CD8-positive, alpha-beta memory T cell (primary cell): ENCODE measurements at regions of chr11 and their contacts with region 1.

Region 1: DNA sequence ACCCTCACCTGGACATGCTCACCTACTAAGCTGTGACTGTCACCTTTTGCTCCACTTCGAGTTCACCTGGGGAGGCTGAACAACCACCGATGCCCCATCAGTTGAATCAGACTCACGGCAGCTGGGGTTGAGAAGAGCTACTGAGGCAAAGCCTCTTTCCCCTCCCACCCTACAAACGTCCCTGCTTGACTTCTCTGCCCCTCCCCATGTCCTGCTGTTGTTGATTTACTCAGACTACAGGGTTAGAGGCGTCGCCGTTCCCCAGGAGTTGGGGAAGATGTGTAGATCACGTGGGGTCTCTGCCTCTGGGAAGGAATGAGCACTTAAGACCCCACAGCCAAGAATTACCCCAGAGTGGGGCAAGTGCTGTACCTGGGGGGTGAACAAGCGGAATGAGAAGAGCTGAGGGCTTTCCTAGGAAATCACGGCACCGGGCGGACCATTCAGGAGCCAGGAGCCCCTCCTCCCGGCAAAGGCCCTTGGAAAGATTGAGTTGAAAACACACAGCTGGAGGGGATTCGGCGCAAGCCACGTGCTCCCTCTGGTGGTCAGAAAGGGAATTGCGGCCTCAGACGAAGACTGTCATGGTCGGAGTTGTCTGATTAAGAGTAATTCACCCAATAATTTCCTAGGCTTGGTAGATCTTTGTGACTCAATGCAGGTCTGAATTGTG is 7.0 kb downstream of the FXYD2 start:
- DNase-seq: peak; percentile 69 to 88 (median 75)
- H3K4me3 ChIP-seq: no peak overlapping the region
- H3K4me3 Mint-ChIP-seq: peak overlapping the region in 4 of 7 donors; percentile 54 to 70 (median 56)
- H3K27ac ChIP-seq: no peak overlapping the region
- H3K27ac Mint-ChIP-seq: peak overlapping the region; percentile 74 to 93 (median 88)
- H3K4me1 ChIP-seq: peaks cover 56% of the 10 kb centered on the region
- H3K4me1 Mint-ChIP-seq: peaks cover 38 to 61% (median 47%) of the 10 kb centered on the region in 3 donors
- H3K27me3 ChIP-seq: no peaks in the 10 kb centered on the region
- H3K27me3 Mint-ChIP-seq: peaks cover 0 to 1% of the 10 kb centered on the region in 2 donors

Region 2: DNA sequence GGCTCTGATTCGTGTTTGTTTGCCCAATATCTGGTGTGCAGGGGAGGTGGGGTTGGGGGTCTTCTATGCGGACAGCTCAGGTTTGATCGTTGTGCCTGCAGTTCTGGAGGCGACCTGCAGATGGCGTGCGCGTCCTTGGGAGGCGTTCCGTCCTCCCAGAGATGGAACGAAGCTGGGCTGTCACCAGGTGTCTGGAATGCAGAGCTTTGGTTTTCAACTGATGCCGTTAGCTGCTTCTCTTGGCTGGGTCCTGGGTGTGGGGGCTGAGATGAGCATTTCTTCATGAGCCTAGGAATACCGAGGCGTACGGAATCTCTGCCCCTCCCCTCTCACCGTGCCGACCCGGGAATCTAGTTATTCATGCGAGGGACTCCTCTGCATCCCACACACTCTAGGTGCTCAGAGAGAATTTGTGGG is 391.2 kb before region 1 on chr11:
- CTCF ChIA-PET with region 1: interaction called, 23 read pairs
- POLR2A ChIA-PET with region 1: no interaction called
- DNase-seq: peak; percentile 38 to 75 (median 51)
- H3K4me3 ChIP-seq: no peak overlapping the region
- H3K4me3 Mint-ChIP-seq: peak overlapping the region in 2 of 7 donors; percentile 47 to 51
- H3K27ac ChIP-seq: no peak overlapping the region
- H3K27ac Mint-ChIP-seq: no peak overlapping the region
- H3K4me1 ChIP-seq: peaks cover 4% of the 10 kb centered on the region
- H3K4me1 Mint-ChIP-seq: peaks cover 4 to 13% (median 6%) of the 10 kb centered on the region in 3 donors
- H3K27me3 ChIP-seq: no peaks in the 10 kb centered on the region
- H3K27me3 Mint-ChIP-seq: peaks cover 5 to 18% of the 10 kb centered on the region in 2 donors

Region 3: DNA sequence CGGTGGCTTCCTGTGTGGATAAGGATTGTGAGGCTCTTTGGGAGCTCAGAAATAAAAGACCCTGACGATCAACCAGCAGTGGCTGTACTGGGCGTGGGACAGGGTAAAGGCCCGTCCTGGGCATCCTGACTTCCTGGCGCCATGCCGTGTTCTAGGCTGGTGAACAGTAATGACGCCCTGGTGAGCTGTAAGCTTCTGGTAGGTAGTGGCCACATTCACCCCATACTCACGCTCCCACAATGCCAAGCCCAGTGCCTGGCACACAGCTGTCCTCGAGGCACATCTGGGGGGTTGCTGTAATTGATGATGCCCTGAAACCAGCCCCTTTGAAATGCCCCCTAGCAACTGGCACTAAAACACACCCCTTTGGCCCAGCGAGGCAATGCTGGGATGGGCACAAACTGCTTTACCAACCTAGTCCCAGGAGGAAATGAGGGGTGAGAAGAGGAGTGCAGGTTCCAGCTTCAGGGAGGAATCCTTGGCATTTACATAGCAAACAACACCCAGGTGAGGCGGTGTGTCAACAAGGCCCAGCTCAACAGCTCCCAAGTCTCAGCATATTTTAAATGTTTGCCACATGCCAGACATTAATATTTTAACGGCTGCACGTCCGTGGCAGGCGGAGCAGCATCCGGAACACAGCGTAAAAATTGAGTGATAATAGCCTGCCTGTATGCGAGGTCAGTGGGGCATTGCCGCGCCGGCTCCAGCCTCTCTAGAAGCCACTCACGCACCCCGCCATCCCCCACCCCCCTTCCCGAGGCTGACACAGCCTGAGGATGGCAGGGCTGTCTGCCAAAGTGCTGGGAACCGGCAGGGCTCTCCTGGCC is 99.8 kb before region 1 on chr11:
- CTCF ChIA-PET with region 1: no interaction called
- POLR2A ChIA-PET with region 1: no interaction called
- DNase-seq: no peak
- H3K4me3 ChIP-seq: no peak overlapping the region
- H3K4me3 Mint-ChIP-seq: no peak overlapping the region
- H3K27ac ChIP-seq: no peak overlapping the region
- H3K27ac Mint-ChIP-seq: no peak overlapping the region
- H3K4me1 ChIP-seq: no peaks in the 10 kb centered on the region
- H3K4me1 Mint-ChIP-seq: no peaks in the 10 kb centered on the region
- H3K27me3 ChIP-seq: peaks cover 4% of the 10 kb centered on the region
- H3K27me3 Mint-ChIP-seq: peaks cover 16 to 45% of the 10 kb centered on the region in 2 donors

Region 4: GRCh38 chr11:117828611-117829368 is 11.3 kb after region 1 on chr11:
- CTCF ChIA-PET with region 1: interaction called, 35 read pairs
- POLR2A ChIA-PET with region 1: interaction called, 8 read pairs
- DNase-seq: peak; percentile 51 to 95 (median 71)
- H3K4me3 ChIP-seq: no peak overlapping the region
- H3K4me3 Mint-ChIP-seq: peak overlapping the region; percentile 7 to 89 (median 57)
- H3K27ac ChIP-seq: peak overlapping the region; percentile 21
- H3K27ac Mint-ChIP-seq: peak overlapping the region; percentile 88 to 97 (median 94)
- H3K4me1 ChIP-seq: peaks cover 46% of the 10 kb centered on the region
- H3K4me1 Mint-ChIP-seq: peaks cover 65 to 83% (median 67%) of the 10 kb centered on the region in 3 donors
- H3K27me3 ChIP-seq: no peaks in the 10 kb centered on the region
- H3K27me3 Mint-ChIP-seq: peaks cover 0 to 2% of the 10 kb centered on the region in 2 donors

Region 5: GRCh38 chr11:117843666-117844484 is 26.4 kb after region 1 on chr11:
- CTCF ChIA-PET with region 1: interaction called, 20 read pairs
- POLR2A ChIA-PET with region 1: no interaction called
- DNase-seq: peak; percentile 64 to 87 (median 76)
- H3K4me3 ChIP-seq: no peak overlapping the region
- H3K4me3 Mint-ChIP-seq: no peak overlapping the region
- H3K27ac ChIP-seq: no peak overlapping the region
- H3K27ac Mint-ChIP-seq: no peak overlapping the region
- H3K4me1 ChIP-seq: peaks cover 8% of the 10 kb centered on the region
- H3K4me1 Mint-ChIP-seq: peaks cover 2 to 9% (median 4%) of the 10 kb centered on the region in 3 donors
- H3K27me3 ChIP-seq: no peaks in the 10 kb centered on the region
- H3K27me3 Mint-ChIP-seq: peaks cover 0 to 3% of the 10 kb centered on the region in 2 donors